ENCODE measurements at regions of chr2 and their contacts with region 1.

Region 1: GRCh38 chr2:7567646-7568045 is 650.4 kb downstream of the RNF144A start:
- DNase-seq: peak in 4 of 5 donors; percentile 59 to 64 (median 60)
- H3K4me3 ChIP-seq: no peak overlapping the region
- H3K4me3 Mint-ChIP-seq: peak overlapping the region; percentile 3 to 78 (median 56)
- H3K27ac ChIP-seq: peak overlapping the region; percentile 16
- H3K27ac Mint-ChIP-seq: peak overlapping the region; percentile 48 to 93 (median 89)
- H3K4me1 ChIP-seq: peaks cover 40% of the 10 kb centered on the region
- H3K4me1 Mint-ChIP-seq: peaks cover 27 to 57% (median 46%) of the 10 kb centered on the region in 4 donors
- H3K27me3 ChIP-seq: no peaks in the 10 kb centered on the region
- H3K27me3 Mint-ChIP-seq: no peaks in the 10 kb centered on the region

Region 2: GRCh38 chr2:7517088-7517487 is 50.6 kb before region 1 on chr2:
- CTCF ChIA-PET with region 1: no interaction called
- POLR2A ChIA-PET with region 1: no interaction called
- intact Hi-C with region 1: loop called (anchors 5 kb)
- DNase-seq: peak in 3 of 5 donors; percentile 18 to 37 (median 29)
- H3K4me3 ChIP-seq: peak overlapping the region in 1 of 2 donors; percentile 20
- H3K4me3 Mint-ChIP-seq: peak overlapping the region; percentile 21 to 85 (median 72)
- H3K27ac ChIP-seq: no peak overlapping the region
- H3K27ac Mint-ChIP-seq: peak overlapping the region; percentile 22 to 88 (median 72)
- H3K4me1 ChIP-seq: peaks cover 13% of the 10 kb centered on the region
- H3K4me1 Mint-ChIP-seq: peaks cover 3 to 19% (median 12%) of the 10 kb centered on the region in 4 donors
- H3K27me3 ChIP-seq: no peaks in the 10 kb centered on the region
- H3K27me3 Mint-ChIP-seq: no peaks in the 10 kb centered on the region

Measured in CD4-positive, alpha-beta memory T cell (primary cell).